ENCODE measurements at regions of chr10 and their contacts with region 1.

Region 1: GRCh38 chr10:27742195-27743011 is 3.2 kb downstream of the MKX start:
- DNase-seq: peak; percentile 81
- H3K4me3 ChIP-seq: peak overlapping the region; percentile 66
- H3K27ac ChIP-seq: no peak overlapping the region
- H3K4me1 ChIP-seq: peaks cover 11% of the 10 kb centered on the region
- CTCF ChIP-seq: peak; percentile 81

Region 2: GRCh38 chr10:27661514-27662286 is 80.7 kb before region 1 on chr10:
- CTCF ChIA-PET with region 1: no interaction called
- POLR2A ChIA-PET with region 1: no interaction called
- intact Hi-C with region 1: no loop called
- DNase-seq: no peak
- H3K4me3 ChIP-seq: no peak overlapping the region
- H3K27ac ChIP-seq: no peak overlapping the region
- H3K4me1 ChIP-seq: no peaks in the 10 kb centered on the region
- CTCF ChIP-seq: no peak

Region 3: DNA sequence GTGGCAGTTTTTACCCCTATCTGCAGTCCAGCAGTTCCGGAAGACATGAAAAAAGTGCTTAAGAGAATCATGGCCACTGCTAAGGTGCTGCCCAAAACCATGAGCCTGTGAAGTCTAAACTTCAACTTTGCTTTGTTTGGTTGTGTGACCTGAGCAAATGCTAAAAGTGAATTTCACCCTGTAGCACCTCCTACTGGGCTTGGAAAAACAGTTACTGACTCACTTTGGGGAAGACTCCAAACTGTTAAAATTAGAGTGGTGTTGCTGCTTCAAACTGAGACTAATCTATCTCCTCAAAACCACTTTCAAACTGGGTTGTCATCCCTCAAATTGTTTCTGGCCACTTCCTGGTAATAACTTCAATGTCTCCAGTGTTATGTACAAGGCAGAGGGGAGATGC is 18.1 kb before region 1 on chr10:
- CTCF ChIA-PET with region 1: no interaction called
- POLR2A ChIA-PET with region 1: interaction called, 4 read pairs
- intact Hi-C with region 1: loop called (anchors 1 kb)
- DNase-seq: no peak
- H3K4me3 ChIP-seq: no peak overlapping the region
- H3K27ac ChIP-seq: no peak overlapping the region
- H3K4me1 ChIP-seq: peaks cover 13% of the 10 kb centered on the region
- CTCF ChIP-seq: peak; percentile 60

Region 4: GRCh38 chr10:27819781-27820531 is 77.6 kb after region 1 on chr10:
- CTCF ChIA-PET with region 1: no interaction called
- POLR2A ChIA-PET with region 1: no interaction called
- intact Hi-C with region 1: no loop called
- DNase-seq: no peak
- H3K4me3 ChIP-seq: no peak overlapping the region
- H3K27ac ChIP-seq: no peak overlapping the region
- H3K4me1 ChIP-seq: no peaks in the 10 kb centered on the region
- CTCF ChIP-seq: no peak

Region 5: DNA sequence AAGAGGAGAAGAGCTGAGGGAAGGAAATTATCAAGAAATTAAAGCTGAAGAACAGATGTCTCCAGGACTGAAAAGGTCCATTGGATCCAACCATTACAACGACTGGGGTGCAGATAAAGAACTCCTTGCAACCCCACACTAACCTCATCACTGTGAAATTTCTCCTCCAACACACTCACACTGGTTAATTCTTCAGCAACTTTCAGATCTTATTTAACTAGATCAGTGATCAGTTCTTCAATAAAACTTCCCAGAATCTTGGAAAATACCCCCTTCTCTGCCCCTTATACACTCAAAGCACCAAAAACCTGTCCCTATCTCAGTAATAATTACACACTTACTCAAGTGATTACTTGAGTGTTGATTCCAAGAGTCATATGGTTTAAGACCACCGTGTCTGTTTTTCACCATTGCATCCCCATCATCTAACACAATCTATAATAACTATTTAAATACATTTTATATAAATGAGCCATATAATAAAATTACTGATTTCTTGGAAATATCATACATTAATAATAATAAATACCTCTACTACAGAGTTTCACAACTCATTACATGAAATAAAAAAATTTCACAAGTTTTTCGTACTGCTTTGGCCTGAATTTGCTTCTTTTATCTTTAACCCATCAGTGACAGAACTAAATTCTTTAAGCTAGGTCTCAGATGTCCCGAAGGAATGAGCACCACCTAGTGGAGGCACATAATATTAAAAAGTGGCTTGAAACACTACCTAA is 436.8 kb after region 1 on chr10:
- CTCF ChIA-PET with region 1: no interaction called
- POLR2A ChIA-PET with region 1: no interaction called
- intact Hi-C with region 1: loop called (anchors 1 kb)
- DNase-seq: peak; percentile 66
- H3K4me3 ChIP-seq: no peak overlapping the region
- H3K27ac ChIP-seq: no peak overlapping the region
- H3K4me1 ChIP-seq: peaks cover 36% of the 10 kb centered on the region
- CTCF ChIP-seq: peak; percentile 98

Region 6: DNA sequence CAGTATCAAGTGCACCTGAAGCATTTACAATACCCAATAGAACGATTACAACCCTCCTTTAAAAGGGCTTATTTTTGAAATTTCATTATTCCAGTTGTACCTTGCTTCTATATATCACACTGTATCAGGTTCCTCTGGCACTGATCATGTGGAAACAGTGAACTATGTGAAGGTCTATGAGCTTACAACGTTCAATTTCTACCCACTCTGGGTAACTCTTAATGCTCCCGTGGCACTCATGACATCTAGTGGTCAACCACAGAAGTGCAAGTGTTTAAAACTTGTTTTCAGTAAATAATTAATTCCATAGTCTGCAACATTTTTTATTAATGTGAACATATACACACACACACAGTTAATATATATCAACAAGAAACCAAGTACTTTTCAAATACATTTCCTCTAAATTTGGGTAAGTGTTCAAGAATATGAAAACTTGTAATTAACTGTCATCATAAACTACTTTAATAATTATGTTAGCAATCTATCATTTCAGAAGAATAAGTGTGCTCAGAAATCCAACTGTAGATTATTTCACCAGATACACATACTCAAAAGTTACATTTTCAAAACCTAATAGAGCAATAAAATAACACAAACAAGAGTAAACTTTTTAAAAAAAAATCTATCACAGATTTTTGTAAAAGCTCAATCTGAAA is 499.5 kb after region 1 on chr10:
- CTCF ChIA-PET with region 1: no interaction called
- POLR2A ChIA-PET with region 1: no interaction called
- intact Hi-C with region 1: loop called (anchors 5 kb)
- DNase-seq: peak; percentile 62
- H3K4me3 ChIP-seq: no peak overlapping the region
- H3K27ac ChIP-seq: no peak overlapping the region
- H3K4me1 ChIP-seq: peaks cover 12% of the 10 kb centered on the region
- CTCF ChIP-seq: peak; percentile 99

Measured in OCI-LY7 (cell line).